ENCODE measurements at regions of chr2 and their contacts with region 1.

Region 1: DNA sequence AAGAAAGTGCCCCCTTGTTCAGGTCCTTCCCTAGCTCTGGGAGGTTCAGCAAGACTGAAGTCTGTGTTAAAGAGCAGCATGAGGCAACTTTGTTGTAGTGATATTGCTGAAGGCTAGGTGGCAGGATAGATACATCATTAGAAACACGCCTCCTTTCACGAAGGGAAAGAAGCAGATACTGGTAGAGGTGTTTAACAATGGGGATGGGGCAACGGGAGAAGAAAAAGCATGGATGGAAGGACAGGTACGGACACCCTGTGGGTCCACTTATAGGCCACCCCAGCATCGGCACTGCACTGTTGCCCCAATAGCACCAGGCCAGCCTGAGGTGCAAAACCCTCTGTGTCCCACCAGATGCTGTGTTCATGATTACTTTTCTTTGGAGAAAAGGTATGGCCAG is 3.5 kb upstream of the IGFBP5 start:
- DNase-seq: no peak
- H3K4me3 ChIP-seq: no peak overlapping the region
- H3K27ac ChIP-seq: no peak overlapping the region
- H3K4me1 ChIP-seq: 0 out of 2 replicates have a peak, but pooled peaks cover 3% of the 10 kb centered on the region
- H3K27me3 ChIP-seq: no peaks in the 10 kb centered on the region
- CTCF ChIP-seq: peak; percentile 67

Region 2: GRCh38 chr2:216287251-216287650 is 411.6 kb before region 1 on chr2:
- CTCF ChIA-PET with region 1: no interaction called
- POLR2A ChIA-PET with region 1: no interaction called
- intact Hi-C with region 1: no loop called
- DNase-seq: no peak
- H3K4me3 ChIP-seq: no peak overlapping the region
- H3K27ac ChIP-seq: no peak overlapping the region
- H3K4me1 ChIP-seq: no peaks in the 10 kb centered on the region
- H3K27me3 ChIP-seq: no peaks in the 10 kb centered on the region
- CTCF ChIP-seq: no peak

Region 3: DNA sequence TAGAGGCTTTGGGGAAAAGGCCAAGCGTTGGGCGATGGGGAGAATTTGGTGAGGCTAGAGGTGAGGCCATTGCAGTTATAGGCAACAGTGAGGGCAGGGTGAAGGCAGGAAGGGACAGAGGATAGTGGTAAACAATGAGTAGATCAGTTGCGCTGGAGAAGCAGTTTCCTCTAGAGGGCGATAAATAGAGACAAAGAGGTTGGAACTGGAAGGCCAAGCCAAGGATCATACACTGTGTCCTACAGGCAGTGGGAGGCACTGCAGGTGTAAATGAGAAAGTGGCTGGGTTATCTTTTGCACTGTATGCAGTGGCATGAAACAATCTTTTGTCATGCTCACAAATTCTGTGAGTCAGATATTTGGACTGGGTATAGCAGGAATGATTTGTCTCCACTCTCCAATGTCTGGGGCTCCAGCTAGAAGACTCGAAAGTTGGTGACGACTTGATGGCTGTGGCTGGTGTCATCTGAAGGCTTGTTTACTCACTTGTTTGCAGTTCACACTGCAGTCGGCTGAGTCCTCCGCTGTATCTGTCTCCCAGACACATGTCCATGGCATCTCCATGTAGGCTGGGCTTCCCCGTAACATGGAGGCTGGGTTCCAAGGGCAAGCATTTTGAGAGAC is 78.9 kb after region 1 on chr2:
- CTCF ChIA-PET with region 1: no interaction called
- POLR2A ChIA-PET with region 1: no interaction called
- intact Hi-C with region 1: loop called (anchors 5 kb)
- DNase-seq: peak; percentile 21 to 57
- H3K4me3 ChIP-seq: no peak overlapping the region
- H3K27ac ChIP-seq: no peak overlapping the region
- H3K4me1 ChIP-seq: peaks cover 13% of the 10 kb centered on the region
- H3K27me3 ChIP-seq: no peaks in the 10 kb centered on the region
- CTCF ChIP-seq: peak; percentile 61

Region 4: GRCh38 chr2:216792222-216793021 is 93.5 kb after region 1 on chr2:
- CTCF ChIA-PET with region 1: no interaction called
- POLR2A ChIA-PET with region 1: no interaction called
- intact Hi-C with region 1: loop called (anchors 5 kb)
- DNase-seq: peak; percentile 64 to 87
- H3K4me3 ChIP-seq: no peak overlapping the region
- H3K27ac ChIP-seq: peak overlapping the region; percentile 89
- H3K4me1 ChIP-seq: peaks cover 10% of the 10 kb centered on the region
- H3K27me3 ChIP-seq: no peaks in the 10 kb centered on the region
- CTCF ChIP-seq: no peak

Region 5: GRCh38 chr2:217166241-217166850 is 467.5 kb after region 1 on chr2:
- CTCF ChIA-PET with region 1: no interaction called
- POLR2A ChIA-PET with region 1: interaction called, 6 read pairs
- intact Hi-C with region 1: loop called (anchors 2 kb)
- DNase-seq: peak in 1 of 2 experiments; percentile 4
- H3K4me3 ChIP-seq: no peak overlapping the region
- H3K27ac ChIP-seq: no peak overlapping the region
- H3K4me1 ChIP-seq: peaks cover 14% of the 10 kb centered on the region; the same call in 1 of the 2 replicates
- H3K27me3 ChIP-seq: no peaks in the 10 kb centered on the region
- CTCF ChIP-seq: peak; percentile 67

Region 6: GRCh38 chr2:217331523-217332139 is 632.7 kb after region 1 on chr2:
- CTCF ChIA-PET with region 1: no interaction called
- POLR2A ChIA-PET with region 1: no interaction called
- intact Hi-C with region 1: loop called (anchors 5 kb)
- DNase-seq: peak; percentile 88 to 99
- H3K4me3 ChIP-seq: no peak overlapping the region
- H3K27ac ChIP-seq: peak overlapping the region; percentile 79
- H3K4me1 ChIP-seq: peaks cover 90% of the 10 kb centered on the region
- H3K27me3 ChIP-seq: no peaks in the 10 kb centered on the region
- CTCF ChIP-seq: no peak

Region 7: DNA sequence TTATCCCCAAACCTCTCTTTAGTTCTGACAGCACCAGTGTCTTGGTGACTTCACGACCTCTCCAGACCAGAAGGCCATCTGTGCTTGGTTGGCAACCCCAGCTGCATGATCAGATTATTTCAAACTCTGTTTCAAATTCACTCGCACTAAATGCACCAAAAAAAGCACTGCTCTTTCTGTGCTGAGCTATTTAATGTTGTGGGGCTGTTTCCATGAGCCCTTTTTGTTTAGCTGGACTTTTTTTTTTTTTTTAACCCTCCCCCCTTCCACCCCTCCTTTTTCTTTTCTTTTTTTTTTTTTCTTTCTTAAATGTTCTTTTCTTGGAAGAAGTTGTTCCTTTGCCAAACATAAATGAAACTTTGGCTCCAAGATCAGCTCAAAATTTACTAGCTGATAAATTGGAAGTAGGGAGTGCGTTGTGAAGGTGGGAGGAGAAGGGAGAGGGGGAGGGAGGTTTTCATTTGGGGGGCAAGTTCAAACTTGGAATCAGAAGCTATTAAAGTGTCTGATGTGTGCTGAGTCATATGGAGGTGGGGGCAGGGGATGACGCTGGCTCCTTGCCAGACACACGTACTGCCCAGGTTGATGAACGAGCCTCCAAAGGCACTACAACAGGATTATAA is 704.0 kb after region 1 on chr2:
- CTCF ChIA-PET with region 1: no interaction called
- POLR2A ChIA-PET with region 1: interaction called, 10 read pairs
- intact Hi-C with region 1: no loop called
- DNase-seq: peak in 1 of 2 experiments; percentile 55
- H3K4me3 ChIP-seq: no peak overlapping the region
- H3K27ac ChIP-seq: no peak overlapping the region
- H3K4me1 ChIP-seq: peaks cover 9% of the 10 kb centered on the region
- H3K27me3 ChIP-seq: no peaks in the 10 kb centered on the region
- CTCF ChIP-seq: no peak

Region 8: DNA sequence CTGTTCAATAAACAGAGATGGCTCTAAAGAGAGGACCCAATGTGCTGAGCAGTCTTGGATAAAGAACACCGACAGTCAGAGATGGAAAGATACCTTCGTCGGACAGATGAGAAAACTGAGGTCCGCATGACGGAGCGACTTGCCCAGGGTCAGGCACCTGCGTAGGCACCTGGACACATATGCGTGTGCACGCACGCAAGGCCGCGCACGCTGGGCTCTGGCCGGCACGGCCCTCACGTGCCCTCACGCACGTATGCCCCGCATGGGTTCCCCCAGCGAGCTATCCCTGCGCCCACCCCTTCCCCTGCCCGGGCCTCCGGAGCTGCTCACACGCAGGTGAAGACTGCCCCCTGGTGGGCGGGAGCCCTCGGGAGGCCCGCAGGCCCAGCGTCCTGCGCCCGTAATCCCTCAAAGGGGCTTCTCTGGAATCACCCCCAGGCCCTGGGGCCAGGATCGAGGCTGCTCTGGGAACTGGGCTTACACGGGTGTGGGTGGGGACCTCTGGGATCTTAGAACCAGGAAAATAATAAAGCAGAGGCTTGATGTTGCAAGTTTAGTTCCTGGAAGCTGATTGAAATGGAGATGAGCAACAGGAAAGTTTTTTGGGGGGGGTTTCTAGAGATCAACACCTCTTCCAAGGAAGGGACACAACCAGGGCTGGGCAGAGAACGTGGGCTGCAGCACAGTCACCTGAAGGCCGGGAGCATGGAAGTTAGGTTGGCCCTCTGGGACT is 1057.6 kb after region 1 on chr2:
- CTCF ChIA-PET with region 1: no interaction called
- POLR2A ChIA-PET with region 1: no interaction called
- intact Hi-C with region 1: loop called (anchors 5 kb)
- DNase-seq: peak in 1 of 2 experiments; percentile 49
- H3K4me3 ChIP-seq: no peak overlapping the region
- H3K27ac ChIP-seq: no peak overlapping the region
- H3K4me1 ChIP-seq: no peaks in the 10 kb centered on the region
- H3K27me3 ChIP-seq: 0 out of 2 replicates have a peak, but pooled peaks cover 4% of the 10 kb centered on the region
- CTCF ChIP-seq: peak; percentile 79

Measured in PC-9 (cell line).